ENCODE measurements at regions of chr14 and their contacts with region 1.

Region 1: DNA sequence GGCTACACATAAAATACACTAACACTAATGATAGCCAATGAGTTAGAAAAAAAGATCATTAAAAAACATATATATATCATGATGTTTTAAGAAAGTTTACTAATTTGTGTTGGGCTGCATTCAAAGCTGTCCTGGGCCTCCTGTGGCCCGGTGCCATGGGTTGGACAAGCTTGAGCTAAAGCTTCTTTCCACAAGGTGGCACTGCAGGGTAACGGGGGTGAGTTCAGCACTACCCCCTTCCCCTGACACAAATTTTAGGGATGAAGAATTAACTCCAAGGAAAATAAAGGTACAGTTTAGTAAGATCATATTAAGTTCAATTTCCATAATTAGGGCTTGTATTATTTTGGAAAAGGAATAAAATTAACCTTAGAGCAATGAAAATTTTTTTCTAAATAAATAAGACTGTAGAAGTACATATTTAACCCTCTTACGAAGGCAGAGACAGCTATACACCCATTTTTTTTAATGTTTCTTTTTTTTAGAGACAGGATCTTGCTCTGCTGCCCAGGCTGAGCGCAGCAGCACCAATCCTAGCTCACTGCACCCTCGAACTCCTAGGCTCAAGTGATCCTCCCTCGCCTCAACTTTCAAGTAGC is 38.9 kb downstream of the PPP1R13B start:
- DNase-seq: peak; percentile 58
- ATAC-seq: peak; percentile 96
- H3K4me3 ChIP-seq: no peak overlapping the region
- H3K27ac ChIP-seq: no peak overlapping the region
- H3K4me1 ChIP-seq: no peaks in the 10 kb centered on the region
- H3K27me3 ChIP-seq: no peaks in the 10 kb centered on the region
- CTCF ChIP-seq: peak; percentile 81 to 93 (median 81)
- POLR2A ChIP-seq: no peak
- RAD21 ChIP-seq: peak; percentile 95

Region 2: GRCh38 chr14:103576371-103577024 is 232.0 kb before region 1 on chr14:
- CTCF ChIA-PET with region 1: interaction called, 3 read pairs
- POLR2A ChIA-PET with region 1: interaction called, 3 read pairs
- RAD21 ChIA-PET with region 1: no interaction called
- intact Hi-C with region 1: loop called (anchors 5 kb)
- DNase-seq: peak; percentile 53
- ATAC-seq: peak; percentile 96
- H3K4me3 ChIP-seq: peak overlapping the region in 1 of 2 experiments; percentile 4; a peak in 1 of 4 replicates
- H3K27ac ChIP-seq: peak overlapping the region; percentile 40
- H3K4me1 ChIP-seq: peaks cover 23 to 29% of the 10 kb centered on the region in 2 experiments
- H3K27me3 ChIP-seq: no peaks in the 10 kb centered on the region
- CTCF ChIP-seq: no peak
- POLR2A ChIP-seq: no peak
- RAD21 ChIP-seq: no peak; the same call in none of the 2 replicates

Region 3: DNA sequence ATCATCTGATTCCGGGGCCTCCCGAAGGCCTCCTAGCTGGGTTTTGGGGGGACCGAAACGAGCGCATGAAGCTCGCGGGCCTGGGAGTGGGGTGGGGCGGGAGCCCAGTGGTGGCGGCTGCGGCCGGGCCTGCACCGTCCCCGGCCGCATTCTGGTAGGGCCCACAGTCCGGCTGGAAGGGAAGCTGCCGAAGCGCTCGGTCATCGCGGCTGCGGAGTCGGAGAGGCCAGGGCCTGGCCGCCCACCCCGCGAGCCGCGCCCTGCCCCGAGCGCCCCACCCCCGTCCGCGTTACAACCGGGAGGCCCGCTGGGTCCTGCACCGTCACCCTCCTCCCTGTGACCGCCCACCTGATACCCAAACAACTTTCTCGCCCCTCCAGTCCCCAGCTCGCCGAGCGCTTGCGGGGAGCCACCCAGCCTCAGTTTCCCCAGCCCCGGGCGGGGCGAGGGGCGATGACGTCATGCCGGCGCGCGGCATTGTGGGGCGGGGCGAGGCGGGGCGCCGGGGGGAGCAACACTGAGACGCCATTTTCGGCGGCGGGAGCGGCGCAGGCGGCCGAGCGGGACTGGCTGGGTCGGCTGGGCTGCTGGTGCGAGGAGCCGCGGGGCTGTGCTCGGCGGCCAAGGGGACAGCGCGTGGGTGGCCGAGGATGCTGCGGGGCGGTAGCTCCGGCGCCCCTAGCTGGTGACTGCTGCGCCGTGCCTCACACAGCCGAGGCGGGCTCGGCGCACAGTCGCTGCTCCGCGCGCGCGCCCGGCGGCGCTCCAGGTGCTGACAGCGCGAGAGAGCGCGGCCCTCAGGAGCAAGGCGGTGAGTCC is 179.6 kb before region 1 on chr14 and contains the start of gene KLC1:
- CTCF ChIA-PET with region 1: no interaction called
- POLR2A ChIA-PET with region 1: no interaction called
- RAD21 ChIA-PET with region 1: no interaction called
- intact Hi-C with region 1: no loop called
- DNase-seq: peak; percentile 31
- ATAC-seq: peak; percentile 63
- H3K4me3 ChIP-seq: peak within 1 kb of the TSS; percentile 53 to 67
- H3K27ac ChIP-seq: peak within 1 kb of the TSS; percentile 85
- H3K4me1 ChIP-seq: peaks cover 32 to 57% of the 10 kb centered on the region in 2 experiments
- H3K27me3 ChIP-seq: no peaks in the 10 kb centered on the region
- CTCF ChIP-seq: no peak
- POLR2A ChIP-seq: peak; percentile 82
- RAD21 ChIP-seq: no peak
- total RNA-seq, gene KLC1: 121 TPM

Region 4: DNA sequence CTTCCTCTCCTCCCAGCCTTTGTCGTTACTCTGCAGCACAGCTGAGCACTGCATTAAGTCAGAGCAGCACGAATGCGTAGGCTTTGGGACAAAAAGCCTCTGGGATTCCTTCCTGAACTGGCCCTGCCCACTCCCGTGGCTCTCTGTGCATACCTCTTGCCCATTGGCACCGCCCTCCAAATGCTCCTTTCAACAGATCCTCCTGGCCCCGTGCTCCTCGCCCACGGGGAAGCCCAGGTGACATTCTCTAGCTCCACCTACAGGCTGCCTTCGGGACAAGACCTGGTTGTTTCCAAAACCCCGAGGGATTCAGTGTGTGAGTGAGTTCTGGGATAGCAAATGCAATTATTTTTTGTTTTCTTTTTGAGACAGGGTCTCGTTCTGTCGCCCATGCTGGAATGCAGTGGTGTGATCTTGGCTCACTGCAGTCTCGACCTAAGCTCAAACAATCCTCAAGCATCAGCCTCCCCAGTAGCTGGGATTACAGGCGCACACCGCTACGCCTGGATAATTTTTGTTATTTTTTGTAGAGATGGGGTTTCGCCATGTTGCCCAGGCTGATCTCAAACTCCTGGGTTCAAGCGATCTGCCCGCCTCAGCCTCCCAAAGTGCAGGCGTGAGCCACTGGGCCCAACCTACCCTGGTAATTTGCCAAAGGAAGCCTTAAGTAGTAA is 101.9 kb after region 1 on chr14:
- CTCF ChIA-PET with region 1: interaction called, 20 read pairs
- POLR2A ChIA-PET with region 1: interaction called, 3 read pairs
- RAD21 ChIA-PET with region 1: interaction called, 4 to 5 read pairs
- intact Hi-C with region 1: loop called (anchors 1 kb)
- DNase-seq: peak; percentile 86
- ATAC-seq: peak; percentile 100
- H3K4me3 ChIP-seq: 0 out of 4 replicates have a peak overlapping the region, but pooled peaks of 1 of the 2 experiments have one; percentile 4
- H3K27ac ChIP-seq: peak overlapping the region; percentile 49
- H3K4me1 ChIP-seq: peaks cover 5 to 11% of the 10 kb centered on the region in 2 experiments; a peak in 3 of 4 replicates
- H3K27me3 ChIP-seq: no peaks in the 10 kb centered on the region
- CTCF ChIP-seq: peak; percentile 87 to 94 (median 87)
- POLR2A ChIP-seq: no peak
- RAD21 ChIP-seq: peak; percentile 97

Region 5: GRCh38 chr14:103984196-103984595 is 175.7 kb after region 1 on chr14:
- CTCF ChIA-PET with region 1: interaction called, 38 read pairs
- POLR2A ChIA-PET with region 1: interaction called, 4 read pairs
- RAD21 ChIA-PET with region 1: no interaction called
- intact Hi-C with region 1: loop called (anchors 1 kb)
- DNase-seq: no peak
- ATAC-seq: no peak
- H3K4me3 ChIP-seq: no peak overlapping the region
- H3K27ac ChIP-seq: no peak overlapping the region
- H3K4me1 ChIP-seq: no peaks in the 10 kb centered on the region
- H3K27me3 ChIP-seq: no peaks in the 10 kb centered on the region
- CTCF ChIP-seq: no peak
- POLR2A ChIP-seq: no peak
- RAD21 ChIP-seq: no peak

Region 6: DNA sequence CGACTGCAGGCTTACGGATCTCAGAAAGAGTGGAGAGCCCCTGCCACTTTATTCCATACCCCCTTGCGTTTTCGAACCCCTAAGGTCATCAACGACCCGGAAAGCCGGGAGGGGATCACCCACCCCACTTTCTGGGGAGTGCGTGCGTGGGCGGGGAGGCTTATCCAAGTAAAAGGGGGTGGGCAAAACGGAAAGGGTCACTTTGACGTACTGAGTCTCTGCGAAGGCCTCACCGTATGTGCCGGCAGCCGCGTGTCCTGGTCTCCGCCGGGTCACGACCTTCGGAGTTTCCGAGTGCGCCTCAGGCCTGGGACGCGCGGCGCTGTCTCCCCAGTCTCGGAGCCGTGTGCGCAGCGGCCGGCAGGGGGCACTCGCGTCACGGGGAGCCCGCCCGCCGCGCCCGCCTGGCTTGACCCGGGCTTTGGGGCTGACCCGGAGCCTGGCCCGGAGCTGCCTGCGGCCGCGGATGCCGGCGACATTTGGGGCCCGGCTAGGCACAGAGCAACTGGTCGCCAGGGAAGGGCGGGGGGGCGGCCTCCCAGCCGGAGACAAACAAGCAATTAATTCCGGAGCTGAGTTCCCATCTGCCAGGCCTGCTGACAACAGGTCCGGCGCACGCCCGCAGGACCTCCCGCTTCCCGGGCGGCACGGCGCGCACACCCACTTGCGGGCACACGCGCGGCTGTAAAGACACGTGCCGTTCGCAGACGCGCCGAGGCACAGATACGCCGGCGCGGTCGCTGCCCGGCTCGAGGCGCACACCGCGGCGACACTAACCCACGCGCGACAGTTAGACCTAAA is 329.0 kb after region 1 on chr14:
- CTCF ChIA-PET with region 1: no interaction called
- POLR2A ChIA-PET with region 1: no interaction called
- RAD21 ChIA-PET with region 1: no interaction called
- intact Hi-C with region 1: loop called (anchors 10 kb)
- DNase-seq: no peak
- ATAC-seq: peak; percentile 76
- H3K4me3 ChIP-seq: peak overlapping the region; percentile 71 to 81
- H3K27ac ChIP-seq: peak overlapping the region; percentile 86; the same call in 1 of the 2 replicates
- H3K4me1 ChIP-seq: peaks cover 10 to 29% of the 10 kb centered on the region in 2 experiments; a peak in 3 of 4 replicates
- H3K27me3 ChIP-seq: no peaks in the 10 kb centered on the region
- CTCF ChIP-seq: peak; percentile 70 to 89 (median 76)
- POLR2A ChIP-seq: no peak
- RAD21 ChIP-seq: peak; percentile 93

Measured in HCT116 (cell line).